Right cardiac atrium (tissue), 5 donors: ENCODE measurements at regions of chr9 and their contacts with region 1.

Region 1: GRCh38 chr9:133532937-133533668 is 1.4 kb upstream of the ADAMTSL2 start:
- DNase-seq: peak; percentile 80 to 93 (median 91)
- ATAC-seq: peak; percentile 7 to 56
- H3K4me3 ChIP-seq: no peak overlapping the region
- H3K27ac ChIP-seq: no peak overlapping the region
- H3K4me1 ChIP-seq: peaks cover under 1% of the 10 kb centered on the region
- H3K27me3 ChIP-seq: no peaks in the 10 kb centered on the region

Region 2: GRCh38 chr9:133492061-133493021 is 40.8 kb before region 1 on chr9:
- intact Hi-C with region 1: no loop called
- DNase-seq: peak; percentile 30 to 76 (median 72)
- ATAC-seq: peak; percentile 7 to 19
- H3K4me3 ChIP-seq: no peak overlapping the region
- H3K27ac ChIP-seq: peak overlapping the region; percentile 13
- H3K4me1 ChIP-seq: peaks cover 9% of the 10 kb centered on the region
- H3K27me3 ChIP-seq: no peaks in the 10 kb centered on the region

Region 3: GRCh38 chr9:133589454-133590227 is 56.5 kb after region 1 on chr9:
- intact Hi-C with region 1: loop called in 1 of 4 experiments (anchors 5 kb)
- DNase-seq: peak in 2 of 3 donors; percentile 6 to 55
- ATAC-seq: no peak
- H3K4me3 ChIP-seq: no peak overlapping the region
- H3K27ac ChIP-seq: no peak overlapping the region
- H3K4me1 ChIP-seq: peaks cover 3% of the 10 kb centered on the region
- H3K27me3 ChIP-seq: no peaks in the 10 kb centered on the region

Region 4: GRCh38 chr9:133726401-133727276 is 193.5 kb after region 1 on chr9:
- intact Hi-C with region 1: loop called in 2 of 4 experiments (anchors 2 to 5 kb)
- DNase-seq: peak in 2 of 3 donors; percentile 79 to 87
- ATAC-seq: peak; percentile 76 to 77
- H3K4me3 ChIP-seq: no peak overlapping the region
- H3K27ac ChIP-seq: no peak overlapping the region
- H3K4me1 ChIP-seq: no peaks in the 10 kb centered on the region
- H3K27me3 ChIP-seq: no peaks in the 10 kb centered on the region